ENCODE measurements at regions of chr2 and their contacts with region 1.

Region 1: GRCh38 chr2:112941753-112942658 is 31.0 kb downstream of the IL37 start:
- DNase-seq: peak; percentile 57 to 92
- H3K4me3 ChIP-seq: no peak overlapping the region
- CTCF ChIP-seq: no peak
- POLR2A ChIP-seq: no peak

Region 2: DNA sequence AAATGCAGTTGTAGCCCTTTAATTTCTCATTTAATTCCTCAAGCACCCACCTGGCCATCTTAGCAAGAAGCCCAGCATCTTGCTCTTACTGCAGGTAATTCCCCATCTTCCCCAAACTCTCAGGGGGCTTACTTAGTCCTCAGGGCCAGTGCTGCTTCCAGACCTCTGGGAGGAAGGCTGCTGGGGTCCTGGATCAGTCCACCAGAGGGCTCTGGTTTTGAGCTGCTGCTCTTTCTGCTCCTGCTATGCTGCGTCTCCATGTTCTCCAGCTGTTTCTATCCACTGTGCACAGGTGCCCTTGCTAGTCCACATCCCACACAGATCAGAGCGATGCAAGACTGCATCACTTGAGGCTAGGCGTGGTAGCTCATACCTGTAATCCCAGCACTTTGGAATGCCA is 921.4 kb before region 1 on chr2:
- intact Hi-C with region 1: no loop called
- DNase-seq: no peak
- H3K4me3 ChIP-seq: no peak overlapping the region
- CTCF ChIP-seq: no peak
- POLR2A ChIP-seq: no peak

Region 3: GRCh38 chr2:112726497-112727190 is 215.4 kb before region 1 on chr2:
- intact Hi-C with region 1: no loop called
- DNase-seq: peak; percentile 87 to 98
- H3K4me3 ChIP-seq: no peak overlapping the region
- CTCF ChIP-seq: peak in 1 of 3 donors; percentile 94
- POLR2A ChIP-seq: no peak

Region 4: GRCh38 chr2:112749755-112750559 is 192.0 kb before region 1 on chr2:
- intact Hi-C with region 1: loop called (anchors 5 kb)
- DNase-seq: peak in 1 of 2 donors; percentile 92
- H3K4me3 ChIP-seq: no peak overlapping the region
- CTCF ChIP-seq: peak in 1 of 3 donors; percentile 80
- POLR2A ChIP-seq: no peak